Mammary epithelial cell (primary cell): ENCODE measurements at regions of chr14 and their contacts with region 1.

Region 1: DNA sequence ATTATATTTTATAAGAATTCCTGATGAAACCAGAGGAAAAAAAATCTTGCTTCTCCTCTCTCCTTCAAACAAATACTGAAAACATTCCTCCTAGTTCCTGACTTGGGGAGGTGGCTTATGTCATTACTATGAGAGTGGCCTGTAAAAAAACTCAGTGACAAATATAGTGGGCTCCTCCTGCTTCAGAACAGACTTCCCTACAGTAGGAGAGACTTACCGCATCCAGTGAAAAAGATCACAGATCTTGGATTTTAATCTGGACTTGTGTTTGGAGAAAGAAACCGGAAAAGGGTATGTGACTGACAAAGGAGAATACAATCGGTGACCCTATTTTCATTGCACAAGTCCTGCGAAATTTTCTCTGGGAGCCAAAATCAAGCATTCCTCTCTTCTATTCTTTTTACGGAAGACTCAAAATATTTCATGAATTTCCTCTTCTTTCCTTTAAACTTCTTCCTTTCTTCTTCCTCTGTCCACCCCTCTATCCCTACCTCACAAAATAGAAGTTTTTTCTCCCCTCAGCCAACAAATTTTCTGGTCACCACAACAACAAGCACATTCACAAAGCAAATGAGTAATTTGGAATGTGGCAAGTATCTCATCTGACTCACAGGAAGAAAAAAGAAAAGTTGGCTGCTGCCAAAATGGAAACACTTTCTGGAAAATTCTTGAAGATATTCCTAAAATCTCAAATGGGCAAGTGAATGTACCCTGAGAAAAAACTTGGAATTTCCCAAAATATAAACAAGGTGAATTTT is 185.1 kb upstream of the CDKN3 start:
- DNase-seq: peak; percentile 79
- H3K4me3 ChIP-seq: peak overlapping the region in 2 of 3 experiments; percentile 2 to 22
- H3K27ac ChIP-seq: peak overlapping the region; percentile 99
- H3K4me1 ChIP-seq: peaks cover 58% of the 10 kb centered on the region
- H3K27me3 ChIP-seq: no peaks in the 10 kb centered on the region
- CTCF ChIP-seq: no peak

Region 2: DNA sequence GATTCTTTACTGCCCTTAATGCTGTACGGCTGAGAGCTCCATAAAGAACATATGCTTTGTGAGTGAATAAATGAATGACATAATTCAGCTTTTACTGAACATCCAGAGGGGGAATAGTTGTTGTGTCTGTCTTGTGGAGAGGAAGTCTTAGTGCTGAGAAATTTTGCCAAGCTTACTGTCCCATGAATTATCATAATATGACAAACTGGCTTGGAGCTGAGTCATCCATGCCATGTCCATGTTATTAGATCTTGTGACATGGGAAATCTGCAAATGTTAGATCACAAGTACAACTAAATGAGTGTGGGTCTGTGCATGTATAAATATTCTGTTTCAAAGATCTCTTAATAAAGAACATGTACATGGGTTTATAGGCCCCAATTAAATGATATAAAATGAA is 605.5 kb before region 1 on chr14:
- CTCF ChIA-PET with region 1: interaction called, 10 read pairs
- dilution Hi-C with region 1: no loop called
- in situ Hi-C with region 1: no loop called
- intact Hi-C with region 1: no loop called
- DNase-seq: no peak
- H3K4me3 ChIP-seq: no peak overlapping the region
- H3K27ac ChIP-seq: no peak overlapping the region
- H3K4me1 ChIP-seq: peaks cover 12% of the 10 kb centered on the region
- H3K27me3 ChIP-seq: no peaks in the 10 kb centered on the region
- CTCF ChIP-seq: no peak